HepG2 (cell line): ENCODE measurements at regions of chr17 and their contacts with region 1.

Region 1: DNA sequence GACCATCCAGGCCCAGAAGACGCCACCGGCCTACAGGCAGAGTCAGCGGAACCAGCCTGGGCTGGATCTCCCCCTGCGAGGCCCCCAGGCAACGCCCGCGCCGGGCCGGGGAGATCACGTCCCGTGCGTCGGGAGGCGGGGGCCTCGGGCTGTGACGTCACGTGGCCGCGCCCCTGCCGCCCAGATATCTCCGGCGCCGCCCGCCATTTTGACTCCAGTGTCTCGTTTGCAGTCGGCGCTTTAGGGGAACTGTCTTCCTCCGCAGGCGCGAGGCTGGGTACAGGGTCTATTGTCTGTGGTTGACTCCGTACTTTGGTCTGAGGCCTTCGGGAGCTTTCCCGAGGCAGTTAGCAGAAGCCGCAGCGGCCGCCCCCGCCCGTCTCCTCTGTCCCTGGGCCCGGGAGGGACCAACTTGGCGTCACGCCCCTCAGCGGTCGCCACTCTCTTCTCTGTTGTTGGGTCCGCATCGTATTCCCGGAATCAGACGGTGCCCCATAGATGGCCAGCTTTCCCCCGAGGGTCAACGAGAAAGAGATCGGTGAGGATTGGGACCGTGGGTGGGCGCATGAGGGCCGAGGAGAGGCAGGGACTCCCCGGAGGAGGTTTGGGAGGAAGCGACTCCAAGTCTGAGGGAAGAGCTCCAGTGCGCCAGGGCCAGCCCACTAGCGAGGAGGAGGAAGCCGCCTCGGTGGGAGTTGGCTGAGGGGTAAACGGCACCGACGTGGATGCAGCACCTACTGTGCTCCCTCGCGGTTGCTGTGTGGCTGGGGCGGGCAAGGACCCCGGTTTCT is at the start of gene WSB1:
- DNase-seq: peak; percentile 77
- ATAC-seq: peak; percentile 88
- H3K4me3 ChIP-seq: peak within 1 kb of the TSS; percentile 93 to 99 (median 94)
- H3K27ac ChIP-seq: peak within 1 kb of the TSS; percentile 94
- H3K4me1 ChIP-seq: peaks cover 59% of the 10 kb centered on the region
- H3K27me3 ChIP-seq: no peaks in the 10 kb centered on the region; a peak in 1 of 5 replicates
- CTCF ChIP-seq: peak; percentile 42; the same call in 1 of the 2 replicates
- EP300 ChIP-seq: no peak; a peak in 1 of 4 replicates
- POLR2A ChIP-seq: peak; percentile 99
- RAD21 ChIP-seq: peak; percentile 47; the same call in 1 of the 2 replicates
- total RNA-seq, gene WSB1: 81.3 and 93.3 TPM in 2 replicates

Region 2: GRCh38 chr17:27245230-27245696 is 48.8 kb before region 1 on chr17:
- CTCF ChIA-PET with region 1: no interaction called
- POLR2A ChIA-PET with region 1: interaction called, 21 read pairs
- in situ Hi-C with region 1: loop called (anchors 5 kb)
- intact Hi-C with region 1: loop called (anchors 1 kb)
- DNase-seq: peak; percentile 80
- ATAC-seq: peak; percentile 97
- H3K4me3 ChIP-seq: peak overlapping the region in 2 of 3 experiments; percentile 29 to 41; a peak in 1 of 6 replicates
- H3K27ac ChIP-seq: no peak overlapping the region
- H3K4me1 ChIP-seq: peaks cover 36% of the 10 kb centered on the region
- H3K27me3 ChIP-seq: peaks cover 3 to 11% of the 10 kb centered on the region in 2 experiments; a peak in 3 of 5 replicates
- CTCF ChIP-seq: peak; percentile 97
- EP300 ChIP-seq: no peak
- POLR2A ChIP-seq: no peak
- RAD21 ChIP-seq: peak; percentile 94

Region 3: GRCh38 chr17:27265333-27265732 is 28.8 kb before region 1 on chr17:
- CTCF ChIA-PET with region 1: no interaction called
- POLR2A ChIA-PET with region 1: interaction called, 20 read pairs
- in situ Hi-C with region 1: no loop called
- intact Hi-C with region 1: no loop called
- DNase-seq: peak; percentile 88
- ATAC-seq: peak; percentile 73
- H3K4me3 ChIP-seq: no peak overlapping the region
- H3K27ac ChIP-seq: no peak overlapping the region
- H3K4me1 ChIP-seq: peaks cover 63% of the 10 kb centered on the region
- H3K27me3 ChIP-seq: no peaks in the 10 kb centered on the region
- CTCF ChIP-seq: no peak
- EP300 ChIP-seq: peak in 1 of 2 experiments; percentile 41; a peak in 1 of 4 replicates
- POLR2A ChIP-seq: no peak
- RAD21 ChIP-seq: no peak

Region 4: DNA sequence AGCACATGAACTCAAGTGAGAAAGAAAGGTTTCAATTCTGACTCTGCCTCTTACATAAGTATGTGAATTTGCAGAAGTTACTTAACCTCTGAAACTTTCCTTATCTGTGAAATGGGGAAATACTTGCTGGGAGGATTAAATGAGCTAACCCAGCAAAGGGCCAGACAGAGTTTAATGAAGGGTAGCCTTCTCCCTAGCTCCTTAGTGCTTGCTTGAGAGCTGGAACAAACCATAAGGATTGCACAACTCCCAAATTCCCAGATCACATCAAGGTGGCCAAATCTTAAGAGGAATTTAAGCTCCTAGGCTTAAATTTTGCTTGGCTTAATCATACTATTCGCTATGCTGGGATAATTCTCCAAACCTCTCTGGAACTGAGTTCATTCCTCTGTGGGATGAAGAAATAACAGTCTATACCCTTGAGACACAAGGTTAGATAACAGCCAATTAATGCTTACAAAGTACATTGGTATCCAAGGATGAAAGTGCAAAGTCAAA is 12.0 kb before region 1 on chr17:
- CTCF ChIA-PET with region 1: no interaction called
- POLR2A ChIA-PET with region 1: interaction called, 11 read pairs
- in situ Hi-C with region 1: no loop called
- intact Hi-C with region 1: no loop called
- DNase-seq: no peak
- ATAC-seq: no peak
- H3K4me3 ChIP-seq: no peak overlapping the region
- H3K27ac ChIP-seq: no peak overlapping the region
- H3K4me1 ChIP-seq: peaks cover 26% of the 10 kb centered on the region
- H3K27me3 ChIP-seq: 0 out of 5 replicates have a peak, but pooled peaks cover 2 to 9% of the 10 kb centered on the region in 2 experiments
- CTCF ChIP-seq: no peak
- EP300 ChIP-seq: no peak
- POLR2A ChIP-seq: no peak
- RAD21 ChIP-seq: no peak

Region 5: GRCh38 chr17:27306276-27306835 is 12.3 kb after region 1 on chr17:
- CTCF ChIA-PET with region 1: no interaction called
- POLR2A ChIA-PET with region 1: interaction called, 28 read pairs
- in situ Hi-C with region 1: no loop called
- intact Hi-C with region 1: no loop called
- DNase-seq: no peak
- ATAC-seq: no peak
- H3K4me3 ChIP-seq: no peak overlapping the region
- H3K27ac ChIP-seq: no peak overlapping the region
- H3K4me1 ChIP-seq: peaks cover 30% of the 10 kb centered on the region
- H3K27me3 ChIP-seq: no peaks in the 10 kb centered on the region; a peak in 1 of 5 replicates
- CTCF ChIP-seq: no peak
- EP300 ChIP-seq: no peak
- POLR2A ChIP-seq: no peak
- RAD21 ChIP-seq: no peak

Region 6: DNA sequence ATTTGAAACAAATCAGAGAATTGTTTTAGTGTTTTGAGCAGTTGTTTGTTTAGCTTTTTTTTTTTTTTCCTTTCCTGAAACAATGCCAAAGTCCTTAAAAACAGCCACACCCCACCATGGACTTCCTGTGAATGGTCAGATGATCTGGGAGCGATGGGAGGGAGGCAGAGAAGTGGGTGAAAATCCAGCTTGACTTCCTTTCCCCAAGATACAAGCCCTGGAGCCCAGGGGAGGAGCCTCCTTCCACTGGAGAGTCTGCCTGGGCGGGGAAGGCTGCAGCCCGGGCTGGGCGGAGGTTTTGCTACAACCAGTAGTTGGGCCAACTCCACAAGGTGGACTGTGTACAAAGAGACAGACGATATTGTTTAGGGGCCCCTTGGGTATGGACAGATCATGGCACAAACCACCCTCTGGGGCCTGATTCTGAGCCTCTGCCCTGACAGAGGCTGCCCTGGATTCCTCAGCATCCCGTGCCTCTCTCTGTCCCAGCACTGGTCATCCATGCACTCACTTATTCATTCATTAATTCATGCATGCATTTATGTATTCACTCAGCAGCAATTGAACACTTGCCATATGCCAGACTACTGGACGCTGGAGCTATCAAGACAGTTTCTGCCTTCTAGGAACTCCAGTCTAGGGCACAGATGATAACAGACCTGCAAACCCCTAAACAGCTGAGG is 29.6 kb after region 1 on chr17:
- CTCF ChIA-PET with region 1: no interaction called
- POLR2A ChIA-PET with region 1: interaction called, 20 read pairs
- in situ Hi-C with region 1: no loop called
- intact Hi-C with region 1: no loop called
- DNase-seq: peak; percentile 77
- ATAC-seq: peak; percentile 83
- H3K4me3 ChIP-seq: peak overlapping the region in 1 of 3 experiments; percentile 56; a peak in 3 of 6 replicates
- H3K27ac ChIP-seq: no peak overlapping the region
- H3K4me1 ChIP-seq: peaks cover 61% of the 10 kb centered on the region
- H3K27me3 ChIP-seq: no peaks in the 10 kb centered on the region
- CTCF ChIP-seq: no peak
- EP300 ChIP-seq: no peak; a peak in 1 of 4 replicates
- POLR2A ChIP-seq: no peak
- RAD21 ChIP-seq: no peak

Region 7: GRCh38 chr17:27455914-27456680 is 162.0 kb after region 1 on chr17 and contains the start of gene KSR1:
- CTCF ChIA-PET with region 1: no interaction called
- POLR2A ChIA-PET with region 1: interaction called, 11 read pairs
- in situ Hi-C with region 1: no loop called
- intact Hi-C with region 1: no loop called
- DNase-seq: peak; percentile 60
- ATAC-seq: peak; percentile 80
- H3K4me3 ChIP-seq: peak within 1 kb of the TSS; percentile 83 to 87 (median 84)
- H3K27ac ChIP-seq: peak within 1 kb of the TSS; percentile 82
- H3K4me1 ChIP-seq: peaks cover 40% of the 10 kb centered on the region
- H3K27me3 ChIP-seq: peaks cover 2 to 21% of the 10 kb centered on the region in 2 experiments; a peak in 3 of 5 replicates
- CTCF ChIP-seq: peak; percentile 77
- EP300 ChIP-seq: no peak
- POLR2A ChIP-seq: peak; percentile 43 to 76; a peak in 2 of 4 replicates
- RAD21 ChIP-seq: peak; percentile 71
- total RNA-seq, gene KSR1: 8.0 and 10.1 TPM in 2 replicates

Region 8: DNA sequence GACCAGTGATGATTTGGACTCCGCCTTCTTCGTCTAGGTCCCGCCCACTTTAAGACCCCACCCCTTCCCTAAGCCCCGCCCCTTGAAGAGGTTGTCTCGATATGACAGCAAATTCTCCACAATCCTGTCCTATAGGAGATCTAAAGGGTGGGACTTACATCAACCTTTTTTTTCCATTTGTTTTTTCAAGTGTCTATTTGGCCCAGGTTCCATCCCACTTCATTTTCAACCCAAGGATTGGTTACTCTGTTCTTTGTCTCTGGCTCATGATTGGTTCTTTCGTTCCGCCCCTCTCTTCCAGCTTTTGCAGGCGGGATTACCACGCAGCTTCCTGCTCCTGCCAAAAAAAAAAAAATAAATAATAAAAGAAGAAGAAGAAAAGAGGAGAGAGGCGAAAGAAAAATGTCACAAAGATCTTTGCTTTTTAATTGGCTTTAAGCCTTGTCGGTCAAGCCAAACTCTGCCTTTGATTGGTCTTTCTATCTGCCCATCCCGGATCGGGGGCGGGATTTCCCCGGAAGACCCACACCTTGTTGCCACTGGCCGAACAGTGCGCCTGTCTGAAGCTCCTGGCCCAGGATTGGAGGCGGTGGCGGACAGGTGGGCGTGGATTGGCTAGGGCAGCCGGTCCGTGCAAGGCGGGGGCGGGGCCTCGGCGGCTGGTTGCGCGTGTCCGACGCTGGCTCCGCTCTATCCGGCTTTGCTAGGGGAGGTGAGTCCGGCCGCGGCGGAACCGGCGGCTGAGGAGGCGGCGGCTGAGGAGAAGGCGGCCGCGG is 747.2 kb after region 1 on chr17:
- CTCF ChIA-PET with region 1: no interaction called
- POLR2A ChIA-PET with region 1: no interaction called
- in situ Hi-C with region 1: no loop called
- intact Hi-C with region 1: no loop called
- DNase-seq: peak; percentile 99
- ATAC-seq: peak; percentile 98
- H3K4me3 ChIP-seq: peak overlapping the region; percentile 88 to 89 (median 89)
- H3K27ac ChIP-seq: peak overlapping the region; percentile 51
- H3K4me1 ChIP-seq: peaks cover 50% of the 10 kb centered on the region
- H3K27me3 ChIP-seq: no peaks in the 10 kb centered on the region
- CTCF ChIP-seq: no peak
- EP300 ChIP-seq: no peak
- POLR2A ChIP-seq: peak; percentile 40 to 79; a peak in 3 of 4 replicates
- RAD21 ChIP-seq: no peak